ENCODE measurements at regions of chr10 and their contacts with region 1.

Region 1: DNA sequence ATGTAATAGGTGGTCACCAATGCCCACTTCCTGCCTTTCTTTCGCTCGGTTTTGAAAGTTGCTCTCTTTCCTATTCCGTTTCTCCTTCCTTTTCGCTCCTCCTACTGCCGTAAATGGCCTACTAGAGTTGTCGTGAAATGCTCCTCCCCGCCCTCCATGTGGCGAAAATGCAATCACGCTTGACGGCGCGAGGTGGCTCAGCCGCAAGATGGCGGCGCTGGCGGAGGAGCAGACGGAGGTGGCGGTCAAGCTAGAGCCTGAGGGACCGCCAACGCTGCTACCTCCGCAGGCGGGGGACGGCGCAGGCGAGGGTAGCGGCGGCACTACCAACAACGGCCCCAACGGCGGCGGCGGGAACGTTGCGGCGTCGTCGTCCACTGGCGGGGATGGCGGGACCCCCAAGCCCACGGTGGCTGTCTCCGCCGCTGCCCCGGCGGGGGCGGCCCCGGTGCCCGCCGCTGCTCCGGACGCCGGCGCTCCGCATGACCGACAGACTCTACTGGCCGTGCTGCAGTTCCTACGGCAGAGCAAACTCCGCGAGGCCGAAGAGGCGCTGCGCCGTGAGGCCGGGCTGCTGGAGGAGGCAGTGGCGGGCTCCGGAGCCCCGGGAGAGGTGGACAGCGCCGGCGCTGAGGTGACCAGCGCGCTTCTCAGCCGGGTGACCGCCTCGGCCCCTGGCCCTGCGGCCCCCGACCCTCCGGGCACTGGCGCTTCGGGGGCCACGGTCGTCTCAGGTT is at the start of gene TAF5:
- DNase-seq: peak; percentile 91 to 93 (median 91)
- H3K4me3 ChIP-seq: peak within 1 kb of the TSS; percentile 52 to 89
- H3K4me3 Mint-ChIP-seq: peak within 1 kb of the TSS; percentile 92 to 98 (median 96)
- H3K27ac ChIP-seq: peak within 1 kb of the TSS; percentile 79
- H3K27ac Mint-ChIP-seq: peak within 1 kb of the TSS; percentile 74 to 98 (median 95)
- H3K4me1 ChIP-seq: peaks cover 22% of the 10 kb centered on the region
- H3K4me1 Mint-ChIP-seq: peaks cover 11 to 25% (median 16%) of the 10 kb centered on the region in 4 donors
- H3K27me3 ChIP-seq: no peaks in the 10 kb centered on the region
- H3K27me3 Mint-ChIP-seq: no peaks in the 10 kb centered on the region
- total RNA-seq, gene TAF5: 7.5 to 7.9 TPM

Region 2: DNA sequence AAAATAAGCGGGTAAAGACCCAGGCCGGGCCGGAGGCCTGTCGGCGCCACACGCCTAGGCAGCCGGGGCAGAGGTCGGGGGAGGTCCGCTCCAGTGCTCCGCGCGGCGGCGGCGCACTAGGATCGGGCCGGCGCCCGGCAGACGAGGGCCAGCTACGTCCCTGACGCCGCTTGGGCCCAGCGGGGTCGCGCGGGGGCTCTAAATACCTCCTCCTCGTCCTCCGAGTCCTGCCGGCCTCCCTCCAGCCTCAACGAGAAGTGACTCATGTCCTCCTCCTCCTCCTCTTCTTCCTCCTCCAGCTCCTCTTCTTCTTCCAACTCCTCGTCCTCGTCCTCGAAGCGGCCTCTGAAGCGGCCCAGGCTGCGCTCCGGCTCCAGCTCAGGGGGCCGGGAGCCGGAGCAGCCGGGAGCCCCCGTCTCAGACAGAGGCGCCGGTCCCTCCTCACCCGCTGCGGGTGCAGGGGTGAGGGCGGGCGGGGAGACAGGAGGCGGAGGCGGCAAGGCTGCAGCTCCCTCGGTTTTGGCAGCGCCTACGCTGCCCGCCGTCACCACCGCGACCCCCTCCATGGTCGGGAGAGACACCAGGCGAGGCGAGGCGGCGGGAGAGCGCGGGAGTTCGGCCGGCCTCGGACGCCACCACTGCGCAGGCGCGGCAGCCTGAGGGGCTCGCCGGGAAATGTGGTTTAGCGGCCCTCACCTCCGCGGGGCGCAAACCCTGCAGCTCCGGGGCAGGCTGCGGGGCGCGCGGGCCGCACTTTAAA is 17.3 kb before region 1 on chr10 and contains the start of gene PCGF6:
- CTCF ChIA-PET with region 1: interaction called, 3 read pairs
- POLR2A ChIA-PET with region 1: interaction called, 16 read pairs
- intact Hi-C with region 1: loop called (anchors 1 kb)
- DNase-seq: peak; percentile 56 to 76 (median 66)
- H3K4me3 ChIP-seq: peak within 1 kb of the TSS; percentile 42 to 83
- H3K4me3 Mint-ChIP-seq: peak within 1 kb of the TSS; percentile 84 to 94 (median 90)
- H3K27ac ChIP-seq: peak within 1 kb of the TSS; percentile 62
- H3K27ac Mint-ChIP-seq: peak within 1 kb of the TSS; percentile 81 to 94 (median 91)
- H3K4me1 ChIP-seq: peaks cover 19% of the 10 kb centered on the region
- H3K4me1 Mint-ChIP-seq: peaks cover 4 to 18% (median 9%) of the 10 kb centered on the region in 4 donors
- H3K27me3 ChIP-seq: no peaks in the 10 kb centered on the region
- H3K27me3 Mint-ChIP-seq: no peaks in the 10 kb centered on the region
- total RNA-seq, gene PCGF6: 8.7 to 8.8 TPM

Measured in CD4-positive, alpha-beta memory T cell (primary cell).